Heart left ventricle (tissue), 16 donors: ENCODE measurements at regions of chr4 and their contacts with region 1.

Region 1: DNA sequence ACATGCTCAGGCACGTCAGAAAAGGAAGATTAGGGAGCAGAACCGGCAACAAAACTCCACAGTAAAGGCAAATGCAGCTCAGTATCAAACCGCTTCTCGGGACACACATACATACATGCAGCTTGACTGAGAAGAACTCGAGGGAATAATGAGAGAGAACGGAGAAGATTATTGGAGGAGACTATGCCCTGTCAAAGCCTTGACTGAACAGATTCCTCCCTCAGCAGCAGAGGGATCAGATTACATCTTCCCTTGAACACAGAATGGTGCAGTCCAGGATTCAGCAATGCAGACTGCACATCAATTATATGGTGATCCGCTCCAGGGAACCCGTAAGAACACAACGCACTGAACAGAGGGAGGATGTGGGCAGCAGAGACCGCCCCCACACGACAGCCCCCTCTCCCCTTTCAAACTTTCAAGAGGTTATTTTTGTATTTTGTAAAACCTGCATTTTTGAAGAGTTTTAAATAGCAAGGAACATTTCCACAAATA is 183.2 kb downstream of the FBXW7 start:
- DNase-seq: peak in 4 of 5 donors; percentile 58 to 71 (median 64)
- ATAC-seq: peak; percentile 97 to 100 (median 99)
- H3K4me3 ChIP-seq: peak overlapping the region; percentile 4 to 64 (median 52)
- H3K27ac ChIP-seq: peak overlapping the region; percentile 30 to 82 (median 68)
- H3K4me1 ChIP-seq: peaks cover 0 to 50% (median 30%) of the 10 kb centered on the region in 12 donors
- H3K27me3 ChIP-seq: no peaks in the 10 kb centered on the region
- CTCF ChIP-seq: no peak
- POLR2A ChIP-seq: peak in 1 of 2 donors; percentile 74

Region 2: GRCh38 chr4:151760712-151761527 is 591.7 kb before region 1 on chr4 and contains the start of gene GATB:
- intact Hi-C with region 1: loop called in 1 of 10 experiments (anchors 10 kb)
- DNase-seq: peak; percentile 94 to 96 (median 94)
- ATAC-seq: peak; percentile 99 to 100 (median 100)
- H3K4me3 ChIP-seq: peak within 1 kb of the TSS; percentile 57 to 91 (median 76)
- H3K27ac ChIP-seq: peak within 1 kb of the TSS; percentile 58 to 85 (median 79)
- H3K4me1 ChIP-seq: peaks cover 0 to 16% (median 7%) of the 10 kb centered on the region in 12 donors
- H3K27me3 ChIP-seq: no peaks in the 10 kb centered on the region
- CTCF ChIP-seq: peak; percentile 44 to 69 (median 54)
- POLR2A ChIP-seq: peak in 1 of 2 donors; percentile 52
- total RNA-seq, gene GATB: 60.7 to 122 (median 83.4) TPM

Region 3: DNA sequence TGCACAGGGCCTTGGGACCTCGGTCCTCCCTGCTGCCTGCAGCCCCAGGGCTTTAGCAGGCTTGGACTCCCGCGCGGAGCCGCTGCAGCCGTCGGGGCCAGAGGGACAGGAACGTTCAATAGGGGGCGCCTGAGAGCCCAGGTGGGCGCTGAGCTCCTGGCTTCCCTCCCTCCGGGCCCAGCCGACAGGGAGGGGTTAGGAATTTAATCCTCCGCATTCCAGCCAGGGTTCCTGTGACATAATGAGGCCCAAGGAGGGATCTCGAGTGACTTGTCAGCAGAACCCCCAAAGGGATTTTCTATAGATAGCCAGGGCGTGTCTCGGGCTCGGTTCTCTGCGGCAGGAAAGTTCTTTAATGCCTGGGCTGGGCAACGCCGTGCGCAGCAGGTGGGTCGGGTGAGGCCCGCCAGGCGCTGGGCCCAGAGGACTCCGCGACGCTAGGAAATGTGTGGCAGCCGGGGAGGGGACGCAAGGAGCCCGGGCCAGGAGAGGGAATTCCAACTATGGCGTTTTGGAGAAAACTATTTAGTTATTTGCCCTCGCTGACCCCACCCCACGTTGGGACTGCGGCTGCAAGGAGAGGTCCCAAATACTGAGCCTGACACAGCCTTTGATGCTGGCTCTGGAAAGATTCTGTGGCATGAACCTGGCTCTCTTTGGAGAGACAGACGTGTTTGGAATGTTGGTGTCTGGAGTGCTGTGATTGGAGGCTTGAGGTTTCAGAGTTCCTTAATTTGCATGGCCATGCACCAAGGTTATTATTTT is 306.7 kb before region 1 on chr4:
- intact Hi-C with region 1: loop called in 1 of 10 experiments (anchors 10 kb)
- DNase-seq: peak in 4 of 5 donors; percentile 42 to 77 (median 46)
- ATAC-seq: peak in 3 of 4 donors; percentile 64 to 78 (median 68)
- H3K4me3 ChIP-seq: peak overlapping the region in 7 of 12 donors; percentile 4 to 24 (median 19)
- H3K27ac ChIP-seq: peak overlapping the region in 7 of 12 donors; percentile 23 to 66 (median 57)
- H3K4me1 ChIP-seq: peaks cover 0 to 17% (median 9%) of the 10 kb centered on the region in 12 donors
- H3K27me3 ChIP-seq: peaks cover 0 to 17% (median 0%) of the 10 kb centered on the region in 9 donors
- CTCF ChIP-seq: peak; percentile 44 to 73 (median 50)
- POLR2A ChIP-seq: no peak

Region 4: DNA sequence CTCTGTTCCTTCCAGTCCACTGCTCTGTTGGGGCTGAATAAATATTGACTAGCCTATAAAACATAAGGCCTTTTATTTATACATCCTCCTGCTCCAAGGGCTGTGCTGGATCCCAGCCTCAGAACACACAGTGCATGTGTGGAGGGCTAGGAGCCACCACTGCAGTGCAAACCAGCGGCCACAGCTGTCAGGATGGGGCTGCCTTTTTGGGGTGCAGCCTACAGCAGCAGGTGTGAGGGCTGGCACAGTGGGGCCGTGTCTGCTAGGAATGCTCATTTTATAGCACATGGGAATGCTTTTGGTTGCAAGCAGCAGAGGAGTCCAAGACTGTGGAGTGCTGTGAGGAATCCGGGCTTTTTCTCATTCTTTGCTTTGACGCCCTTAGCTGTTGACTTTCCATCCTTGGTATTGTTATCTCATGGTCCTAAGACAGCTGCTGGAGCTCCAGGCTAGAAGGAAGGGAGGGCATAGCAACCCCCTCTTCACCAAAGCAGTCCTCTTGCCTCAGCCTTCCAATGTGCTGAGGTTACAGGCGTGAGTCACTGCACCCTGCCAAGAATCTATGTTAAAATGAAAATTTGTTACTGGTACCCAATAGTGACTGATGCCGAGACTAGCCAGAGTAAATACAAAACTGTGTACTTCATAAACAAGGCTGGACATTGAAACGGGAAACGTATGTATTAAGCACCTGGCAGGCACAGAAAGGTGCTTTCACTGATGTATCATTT is 257.5 kb before region 1 on chr4:
- intact Hi-C with region 1: loop called in 2 of 10 experiments (anchors 10 kb)
- DNase-seq: no peak
- ATAC-seq: no peak
- H3K4me3 ChIP-seq: no peak overlapping the region
- H3K27ac ChIP-seq: no peak overlapping the region
- H3K4me1 ChIP-seq: peaks cover 0 to 16% (median 5%) of the 10 kb centered on the region in 12 donors
- H3K27me3 ChIP-seq: no peaks in the 10 kb centered on the region
- CTCF ChIP-seq: no peak
- POLR2A ChIP-seq: no peak

Region 5: DNA sequence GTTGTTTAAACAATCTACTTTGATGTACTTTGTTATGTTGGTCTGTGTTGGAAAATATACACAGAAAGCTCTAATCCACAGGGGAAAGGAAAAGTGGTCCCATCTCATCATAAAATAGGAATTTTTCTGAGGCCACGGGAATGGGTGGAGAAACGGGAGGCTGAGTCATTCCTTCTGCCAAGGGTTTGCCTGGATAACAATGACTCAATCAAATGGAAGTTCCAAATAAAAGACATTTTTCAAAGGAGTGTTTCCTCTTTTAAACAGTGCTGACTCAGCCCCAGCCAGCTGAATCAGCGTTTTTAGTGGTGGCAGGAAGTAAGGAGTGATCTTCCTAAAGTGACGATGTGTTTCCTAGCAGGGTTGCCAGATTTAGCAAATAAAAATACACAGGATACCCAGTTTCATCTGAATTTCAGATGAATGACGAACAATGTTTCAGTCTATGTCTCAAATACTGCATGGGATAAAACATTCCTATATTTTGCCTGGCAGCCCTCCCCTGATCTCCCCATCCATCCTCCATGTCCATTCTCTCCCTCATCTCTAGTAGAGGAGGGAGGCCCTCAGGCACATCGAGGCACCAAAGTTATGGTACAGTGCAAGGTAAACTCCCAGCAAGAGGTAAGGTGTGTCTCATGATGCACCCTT is 246.4 kb before region 1 on chr4:
- intact Hi-C with region 1: loop called in 2 of 10 experiments (anchors 5 to 10 kb)
- DNase-seq: peak in 4 of 5 donors; percentile 63 to 82 (median 73)
- ATAC-seq: peak in 3 of 4 donors; percentile 38 to 72 (median 71)
- H3K4me3 ChIP-seq: no peak overlapping the region
- H3K27ac ChIP-seq: peak overlapping the region in 6 of 12 donors; percentile 6 to 65 (median 30)
- H3K4me1 ChIP-seq: peaks cover 5 to 67% (median 38%) of the 10 kb centered on the region in 12 donors
- H3K27me3 ChIP-seq: no peaks in the 10 kb centered on the region
- CTCF ChIP-seq: no peak
- POLR2A ChIP-seq: no peak

Region 6: DNA sequence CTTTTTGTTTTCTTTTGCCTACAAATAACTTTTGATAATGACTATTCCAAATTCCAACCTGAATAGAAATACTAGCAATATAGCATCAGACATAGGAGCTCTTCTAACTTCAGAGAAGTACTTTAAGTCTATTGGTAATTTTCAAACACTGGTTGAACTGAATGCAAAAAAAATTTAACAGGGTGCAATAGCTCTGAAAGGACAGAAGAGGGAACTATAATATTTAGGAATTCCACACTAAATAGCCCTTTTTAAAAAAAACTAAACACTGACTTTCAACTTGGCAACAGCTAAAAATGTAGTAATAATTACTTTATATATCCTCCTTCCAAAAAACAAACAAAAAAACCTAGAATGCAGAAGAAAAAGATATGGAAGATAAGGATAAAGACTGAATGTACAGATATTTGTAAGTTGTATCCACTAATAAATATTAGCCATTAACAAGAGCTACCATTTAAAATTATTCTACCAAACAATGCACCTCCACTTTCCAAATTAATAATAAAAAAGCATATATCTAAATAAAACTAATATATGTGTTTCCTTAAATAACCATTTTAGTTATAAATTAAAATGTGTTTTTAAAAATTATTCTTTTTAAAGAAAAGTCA is 101.8 kb after region 1 on chr4:
- intact Hi-C with region 1: no loop called
- DNase-seq: no peak
- ATAC-seq: no peak
- H3K4me3 ChIP-seq: no peak overlapping the region
- H3K27ac ChIP-seq: no peak overlapping the region
- H3K4me1 ChIP-seq: peaks cover 0 to 15% (median 0%) of the 10 kb centered on the region in 12 donors
- H3K27me3 ChIP-seq: no peaks in the 10 kb centered on the region
- CTCF ChIP-seq: peak; percentile 27 to 70 (median 54)
- POLR2A ChIP-seq: no peak